ENCODE measurements at regions of chr1 and their contacts with region 1.

Region 1: GRCh38 chr1:24586970-24587820 is 31.3 kb downstream of the NCMAP start:
- DNase-seq: peak in 8 of 9 experiments; percentile 10 to 88 (median 58)
- ATAC-seq: peak; percentile 99
- H3K4me3 ChIP-seq: no peak overlapping the region
- H3K4me3 Mint-ChIP-seq: peak overlapping the region; percentile 11
- H3K27ac ChIP-seq: peak overlapping the region; percentile 27 to 30
- H3K27ac Mint-ChIP-seq: peak overlapping the region; percentile 92
- H3K4me1 ChIP-seq: peaks cover 5% of the 10 kb centered on the region
- H3K4me1 Mint-ChIP-seq: peaks cover 6% of the 10 kb centered on the region
- H3K27me3 ChIP-seq: no peaks in the 10 kb centered on the region
- H3K27me3 Mint-ChIP-seq: no peaks in the 10 kb centered on the region
- CTCF ChIP-seq: peak; percentile 92

Region 2: DNA sequence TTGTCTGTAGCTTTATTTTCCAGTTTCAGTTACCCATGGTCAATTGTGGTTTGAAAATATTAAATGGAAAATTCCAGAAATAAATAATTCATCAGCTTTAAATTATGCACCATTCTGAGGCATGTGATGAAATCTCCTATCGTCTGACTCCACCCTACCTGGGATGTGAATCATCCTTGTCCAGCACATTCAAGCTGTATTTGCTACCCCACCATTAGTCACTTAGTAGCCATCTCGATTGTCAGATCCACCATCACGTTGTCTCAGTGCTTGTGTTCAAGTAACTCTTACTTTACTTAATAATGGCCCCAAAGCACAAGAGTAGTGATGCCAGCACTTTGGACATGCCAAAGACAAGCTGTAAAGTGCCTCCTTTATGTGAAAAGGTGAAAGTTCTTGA is 177.7 kb before region 1 on chr1:
- CTCF ChIA-PET with region 1: interaction called, 75 read pairs
- POLR2A ChIA-PET with region 1: interaction called, 18 read pairs
- intact Hi-C with region 1: no loop called
- DNase-seq: no peak
- ATAC-seq: no peak
- H3K4me3 ChIP-seq: no peak overlapping the region
- H3K4me3 Mint-ChIP-seq: no peak overlapping the region
- H3K27ac ChIP-seq: no peak overlapping the region
- H3K27ac Mint-ChIP-seq: no peak overlapping the region
- H3K4me1 ChIP-seq: peaks cover 6% of the 10 kb centered on the region
- H3K4me1 Mint-ChIP-seq: peaks cover 28% of the 10 kb centered on the region
- H3K27me3 ChIP-seq: no peaks in the 10 kb centered on the region
- H3K27me3 Mint-ChIP-seq: no peaks in the 10 kb centered on the region
- CTCF ChIP-seq: no peak

Region 3: GRCh38 chr1:24481101-24481500 is 106.1 kb before region 1 on chr1:
- CTCF ChIA-PET with region 1: interaction called, 6 read pairs
- POLR2A ChIA-PET with region 1: interaction called, 5 read pairs
- intact Hi-C with region 1: loop called in 1 of 2 experiments (anchors 2 kb)
- DNase-seq: peak in 7 of 9 experiments; percentile 24 to 78 (median 61)
- ATAC-seq: peak; percentile 59
- H3K4me3 ChIP-seq: peak overlapping the region in 1 of 2 experiments; percentile 40
- H3K4me3 Mint-ChIP-seq: peak overlapping the region; percentile 73
- H3K27ac ChIP-seq: peak overlapping the region; percentile 67 to 68
- H3K27ac Mint-ChIP-seq: peak overlapping the region; percentile 98
- H3K4me1 ChIP-seq: peaks cover 64% of the 10 kb centered on the region
- H3K4me1 Mint-ChIP-seq: peaks cover 65% of the 10 kb centered on the region
- H3K27me3 ChIP-seq: no peaks in the 10 kb centered on the region
- H3K27me3 Mint-ChIP-seq: no peaks in the 10 kb centered on the region
- CTCF ChIP-seq: no peak

Region 4: DNA sequence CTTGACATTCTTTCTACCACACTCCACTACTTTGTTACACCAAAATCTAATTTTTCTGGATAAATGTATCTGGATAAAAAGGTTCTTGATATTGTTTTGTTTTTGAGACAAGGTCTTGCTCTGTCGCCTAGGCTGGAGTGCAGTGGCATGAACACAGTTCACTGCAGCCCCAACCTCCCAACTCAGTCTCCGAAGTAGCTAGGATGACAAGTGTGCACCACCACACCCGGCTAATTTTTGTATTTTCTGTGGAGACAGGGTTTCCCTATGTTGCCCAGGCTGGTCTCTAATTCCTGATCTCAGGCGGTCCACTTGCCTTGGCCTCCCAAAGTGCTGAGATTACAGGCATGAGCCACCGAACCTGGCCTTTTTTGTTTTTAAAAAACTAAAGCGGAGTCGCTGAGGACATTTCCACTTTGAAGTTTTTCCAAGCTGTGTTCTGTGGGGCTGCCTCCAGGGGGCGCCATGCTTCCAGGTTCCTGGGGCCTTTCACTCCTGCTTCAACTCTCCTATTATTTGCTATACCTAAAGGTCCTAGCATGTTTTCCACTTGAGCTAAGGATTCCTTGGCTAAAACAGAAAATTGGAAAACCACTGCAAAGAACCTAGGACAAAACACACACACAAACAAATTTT is 45.4 kb before region 1 on chr1:
- CTCF ChIA-PET with region 1: interaction called, 19 read pairs
- POLR2A ChIA-PET with region 1: no interaction called
- intact Hi-C with region 1: loop called (anchors 2 to 5 kb)
- DNase-seq: peak in 3 of 9 experiments; percentile 33 to 49 (median 38)
- ATAC-seq: no peak
- H3K4me3 ChIP-seq: no peak overlapping the region
- H3K4me3 Mint-ChIP-seq: no peak overlapping the region
- H3K27ac ChIP-seq: no peak overlapping the region
- H3K27ac Mint-ChIP-seq: peak overlapping the region; percentile 79
- H3K4me1 ChIP-seq: peaks cover 52% of the 10 kb centered on the region
- H3K4me1 Mint-ChIP-seq: peaks cover 62% of the 10 kb centered on the region
- H3K27me3 ChIP-seq: no peaks in the 10 kb centered on the region
- H3K27me3 Mint-ChIP-seq: no peaks in the 10 kb centered on the region
- CTCF ChIP-seq: peak; percentile 48

Region 5: DNA sequence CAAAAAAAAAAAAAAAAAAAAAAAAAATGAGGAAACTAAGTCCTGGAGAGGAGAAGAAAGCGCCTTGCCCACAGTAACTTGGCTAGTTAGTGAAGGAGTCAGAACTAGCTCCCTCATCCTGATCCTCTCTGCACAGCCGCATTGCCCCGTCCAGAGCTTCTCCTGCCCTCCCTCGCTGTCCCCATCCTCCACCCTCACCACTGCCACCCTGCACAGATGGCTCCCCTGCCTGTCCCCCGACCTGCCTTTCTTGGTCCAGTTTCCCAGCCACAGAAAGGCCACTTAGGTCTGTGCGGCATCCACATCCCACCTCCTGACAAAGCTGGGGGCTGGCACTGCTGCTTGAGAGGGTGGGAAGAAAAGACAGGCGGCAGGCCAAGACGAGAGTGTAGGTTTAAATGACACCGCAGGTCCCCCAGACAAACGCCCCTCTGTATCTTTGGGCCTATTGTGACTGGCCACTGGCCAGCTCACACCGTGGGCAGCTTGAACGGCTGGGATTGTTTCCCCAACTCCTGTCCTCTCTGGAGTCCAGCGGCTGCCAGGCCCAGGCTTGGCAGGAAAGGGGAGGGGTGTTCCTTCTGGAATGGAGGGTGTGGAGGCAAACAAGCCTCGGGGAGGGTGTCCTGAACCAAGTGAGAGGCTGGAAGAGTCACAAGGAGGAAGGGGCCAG is 11.1 kb before region 1 on chr1:
- CTCF ChIA-PET with region 1: interaction called, 16 read pairs
- POLR2A ChIA-PET with region 1: interaction called, 5 read pairs
- intact Hi-C with region 1: no loop called
- DNase-seq: no peak
- ATAC-seq: no peak
- H3K4me3 ChIP-seq: no peak overlapping the region
- H3K4me3 Mint-ChIP-seq: no peak overlapping the region
- H3K27ac ChIP-seq: no peak overlapping the region
- H3K27ac Mint-ChIP-seq: no peak overlapping the region
- H3K4me1 ChIP-seq: peaks cover 8% of the 10 kb centered on the region
- H3K4me1 Mint-ChIP-seq: peaks cover 11% of the 10 kb centered on the region
- H3K27me3 ChIP-seq: no peaks in the 10 kb centered on the region
- H3K27me3 Mint-ChIP-seq: no peaks in the 10 kb centered on the region
- CTCF ChIP-seq: no peak